Transverse colon (tissue), 4 donors: ENCODE measurements at regions of chr4 and their contacts with region 1.

Region 1: GRCh38 chr4:33029976-33030375 is 2309.8 kb downstream of the PCDH7 start:
- DNase-seq: no peak
- H3K4me3 ChIP-seq: no peak overlapping the region
- H3K27ac ChIP-seq: no peak overlapping the region
- H3K4me1 ChIP-seq: no peaks in the 10 kb centered on the region
- H3K27me3 ChIP-seq: no peaks in the 10 kb centered on the region
- CTCF ChIP-seq: no peak
- EP300 ChIP-seq: no peak
- POLR2A ChIP-seq: no peak

Region 2: GRCh38 chr4:31580843-31581242 is 1449.1 kb before region 1 on chr4:
- in situ Hi-C with region 1: no loop called
- intact Hi-C with region 1: loop called (anchors 5 kb)
- DNase-seq: no peak
- H3K4me3 ChIP-seq: no peak overlapping the region
- H3K27ac ChIP-seq: no peak overlapping the region
- H3K4me1 ChIP-seq: no peaks in the 10 kb centered on the region
- H3K27me3 ChIP-seq: no peaks in the 10 kb centered on the region
- CTCF ChIP-seq: no peak
- EP300 ChIP-seq: no peak
- POLR2A ChIP-seq: no peak

Region 3: DNA sequence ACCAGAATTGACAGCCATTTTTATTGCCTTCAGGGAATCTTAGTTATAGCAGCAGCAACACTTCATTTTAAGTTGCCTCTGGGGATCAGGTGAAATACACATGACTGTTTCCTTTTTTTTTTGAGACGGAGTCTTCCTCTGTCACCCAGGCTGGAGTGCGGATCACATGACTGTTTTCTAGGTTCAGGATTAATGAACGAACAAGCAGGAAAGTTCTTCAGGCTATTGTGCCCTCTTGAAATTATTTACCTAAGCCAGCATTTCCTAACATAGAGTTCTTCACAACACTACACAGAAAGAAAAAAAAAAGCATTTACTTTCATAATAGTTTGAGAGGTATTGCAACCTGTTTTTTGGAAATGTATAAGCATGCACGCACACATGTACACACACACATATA is 277.0 kb before region 1 on chr4:
- in situ Hi-C with region 1: no loop called
- intact Hi-C with region 1: no loop called
- DNase-seq: no peak
- H3K4me3 ChIP-seq: no peak overlapping the region
- H3K27ac ChIP-seq: no peak overlapping the region
- H3K4me1 ChIP-seq: no peaks in the 10 kb centered on the region
- H3K27me3 ChIP-seq: no peaks in the 10 kb centered on the region
- CTCF ChIP-seq: no peak
- EP300 ChIP-seq: no peak
- POLR2A ChIP-seq: no peak